Common myeloid progenitor, CD34-positive (primary cell): ENCODE measurements at regions of chr6 and their contacts with region 1.

Region 1: DNA sequence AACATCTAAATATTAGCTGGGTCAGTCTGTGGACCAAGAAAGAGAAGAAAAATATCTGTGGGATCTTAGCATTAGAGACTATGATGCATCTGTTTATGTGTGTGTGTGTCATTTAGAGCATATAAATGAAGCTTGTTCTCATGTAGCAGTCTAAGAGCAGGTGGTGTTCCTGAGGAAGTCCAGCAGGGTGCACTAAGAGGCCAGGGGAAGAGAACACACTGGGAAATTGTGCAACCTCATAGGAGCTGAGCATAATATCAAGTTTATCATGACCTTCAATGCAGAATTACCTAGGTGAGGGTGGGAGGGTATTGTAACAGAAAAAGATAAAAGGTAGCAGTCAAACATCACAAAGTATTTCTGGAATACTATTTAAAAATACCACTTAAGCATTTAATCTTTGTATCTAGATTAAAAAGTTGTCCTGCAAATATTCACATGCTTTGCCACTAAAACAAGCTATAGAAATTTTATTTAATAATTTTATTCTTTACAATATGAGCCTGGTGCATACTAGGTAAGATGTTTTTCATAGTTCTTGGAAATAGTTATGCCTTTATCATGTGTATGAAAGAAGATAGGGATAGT is 80.5 kb downstream of the SMPDL3A start:
- DNase-seq: peak; percentile 42 to 75 (median 73)
- H3K4me3 ChIP-seq: no peak overlapping the region
- H3K27ac ChIP-seq: no peak overlapping the region
- H3K4me1 ChIP-seq: no peaks in the 10 kb centered on the region
- H3K27me3 ChIP-seq: peaks cover 0 to 2% (median 0%) of the 10 kb centered on the region in 5 experiments

Region 2: DNA sequence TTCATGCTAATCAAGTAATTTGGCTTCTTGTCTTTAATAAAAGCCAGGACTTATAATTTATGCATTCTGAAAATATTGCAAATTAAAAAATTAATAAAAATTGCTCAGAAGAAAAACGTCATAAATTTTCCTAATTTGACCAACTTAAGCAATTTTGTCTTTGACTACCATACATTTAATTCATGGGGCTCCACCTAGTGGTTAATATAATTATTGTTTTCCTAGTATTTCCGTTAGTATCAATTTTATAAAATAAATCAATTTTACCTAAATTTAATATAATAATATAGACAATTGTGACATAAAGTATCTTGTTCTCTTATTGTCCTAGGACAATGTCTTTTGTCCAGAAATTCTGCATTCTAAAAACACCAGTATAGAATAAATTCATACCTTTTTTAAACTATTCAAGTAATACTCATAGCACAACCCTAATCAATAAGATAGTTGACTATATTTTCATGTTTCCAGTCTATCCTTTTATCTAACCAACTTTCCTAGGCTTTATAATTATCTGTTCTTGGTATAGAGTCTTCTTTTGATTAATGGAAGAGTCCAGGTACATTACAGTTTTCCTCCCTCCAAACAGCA is 447.3 kb after region 1 on chr6:
- CTCF ChIA-PET with region 1: interaction called, 16 read pairs
- POLR2A ChIA-PET with region 1: no interaction called
- DNase-seq: peak; percentile 1 to 19 (median 12)
- H3K4me3 ChIP-seq: no peak overlapping the region
- H3K27ac ChIP-seq: no peak overlapping the region
- H3K4me1 ChIP-seq: no peaks in the 10 kb centered on the region
- H3K27me3 ChIP-seq: peaks cover 0 to 2% (median 0%) of the 10 kb centered on the region in 5 experiments